GM10248 (cell line): ENCODE measurements at regions of chr18 and their contacts with region 1.

Region 1: GRCh38 chr18:77207540-77207939 is 42.1 kb upstream of the GALR1 start:
- DNase-seq: no peak
- CTCF ChIP-seq: peak; percentile 34

Region 2: GRCh38 chr18:76892832-76893231 is 314.7 kb before region 1 on chr18:
- CTCF ChIA-PET with region 1: no interaction called
- POLR2A ChIA-PET with region 1: no interaction called
- DNase-seq: no peak
- CTCF ChIP-seq: no peak

Region 3: GRCh38 chr18:77067291-77068061 is 140.1 kb before region 1 on chr18:
- CTCF ChIA-PET with region 1: interaction called, 12 read pairs
- POLR2A ChIA-PET with region 1: no interaction called
- DNase-seq: no peak
- CTCF ChIP-seq: no peak

Region 4: DNA sequence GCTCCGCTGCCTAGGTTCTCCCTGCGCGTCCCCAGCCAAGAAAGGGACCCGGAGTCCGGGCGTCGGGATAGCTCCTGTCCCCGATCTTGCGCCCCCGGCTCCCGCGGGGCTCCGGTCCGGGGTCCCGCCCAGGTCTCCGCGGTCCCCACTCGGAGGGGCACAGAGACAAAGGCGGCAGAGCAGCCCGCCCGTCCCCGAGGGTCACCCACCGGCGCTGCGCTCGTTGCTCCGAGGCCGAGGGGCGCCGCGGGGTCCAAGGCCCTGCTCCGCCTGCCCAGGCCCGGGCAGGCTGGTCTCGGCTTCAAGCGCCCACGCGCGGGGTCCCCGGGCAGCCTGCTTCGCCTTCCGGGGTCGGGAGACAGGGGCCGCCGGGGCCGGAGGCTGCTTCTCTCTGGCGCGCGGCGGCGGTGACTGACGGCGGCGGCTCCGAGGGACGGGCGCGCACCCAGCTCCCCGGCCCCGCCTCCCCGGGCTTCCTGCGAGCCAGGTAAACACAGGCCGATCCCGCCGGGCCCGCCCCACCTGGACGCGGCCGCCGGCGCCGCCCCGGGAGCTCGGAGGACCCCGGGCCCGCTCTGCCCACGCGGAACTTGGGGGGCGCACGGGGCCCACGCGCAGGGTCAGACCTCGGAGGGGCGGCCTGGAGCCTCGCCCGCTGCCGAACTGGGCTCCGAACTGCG is 75.0 kb before region 1 on chr18 and contains the start of gene MBP:
- CTCF ChIA-PET with region 1: interaction called, 14 read pairs
- POLR2A ChIA-PET with region 1: no interaction called
- DNase-seq: peak; percentile 83
- CTCF ChIP-seq: no peak

Region 5: GRCh38 chr18:77316008-77316407 is 108.5 kb after region 1 on chr18:
- CTCF ChIA-PET with region 1: no interaction called
- POLR2A ChIA-PET with region 1: no interaction called
- DNase-seq: no peak
- CTCF ChIP-seq: no peak

Region 6: DNA sequence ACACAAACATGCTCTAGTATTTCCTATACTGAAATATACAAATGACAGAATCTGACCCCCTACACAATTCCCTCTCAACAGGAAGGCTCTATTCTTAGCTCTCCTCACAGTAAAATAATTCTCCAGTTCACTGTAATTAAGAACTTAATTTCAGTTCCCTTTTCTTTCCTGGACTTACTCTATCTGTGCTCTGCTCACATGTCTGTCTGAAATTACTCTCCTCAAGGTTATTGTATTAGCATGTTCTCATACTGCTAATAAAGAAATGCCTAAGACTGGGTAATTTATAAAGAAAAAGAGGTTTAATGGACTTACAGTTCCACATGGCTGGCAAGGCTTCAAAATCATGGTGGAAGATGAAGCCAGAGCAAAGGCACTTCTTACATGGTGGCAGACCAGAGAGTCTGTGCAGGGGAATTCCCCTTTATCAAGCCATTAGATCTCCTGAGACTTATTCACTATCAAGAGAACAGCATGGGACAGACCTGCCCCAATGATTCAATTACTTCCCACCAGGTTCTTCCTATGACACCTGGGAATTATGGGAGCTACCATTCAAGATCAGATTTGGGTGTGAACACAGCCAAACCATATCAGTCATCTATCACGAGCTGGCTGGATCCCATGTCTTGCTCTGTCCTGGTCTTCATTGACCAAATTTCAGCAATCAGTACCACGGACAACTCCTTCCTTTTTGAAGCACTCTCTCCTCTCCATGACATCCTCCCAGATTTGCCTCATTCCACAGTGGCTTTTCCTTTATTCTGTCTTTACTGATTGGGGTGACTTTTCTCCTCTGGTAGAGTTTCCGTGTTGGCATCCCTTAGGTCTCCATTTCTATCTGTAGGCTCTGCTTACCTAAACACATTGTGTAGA is 153.0 kb after region 1 on chr18:
- CTCF ChIA-PET with region 1: no interaction called
- POLR2A ChIA-PET with region 1: no interaction called
- DNase-seq: no peak
- CTCF ChIP-seq: no peak